ENCODE measurements at regions of chr12 and their contacts with region 1.

Region 1: GRCh38 chr12:14845350-14845750 is 2.0 kb upstream of the ART4 start:
- DNase-seq: peak; percentile 6
- H3K4me3 Mint-ChIP-seq: no peak overlapping the region
- H3K27ac Mint-ChIP-seq: no peak overlapping the region
- H3K4me1 Mint-ChIP-seq: peaks cover 5% of the 10 kb centered on the region
- H3K27me3 Mint-ChIP-seq: peaks cover 5% of the 10 kb centered on the region

Region 2: GRCh38 chr12:14723763-14724162 is 121.6 kb before region 1 on chr12:
- intact Hi-C with region 1: loop called (anchors 1 kb)
- DNase-seq: peak; percentile 31
- H3K4me3 Mint-ChIP-seq: no peak overlapping the region
- H3K27ac Mint-ChIP-seq: no peak overlapping the region
- H3K4me1 Mint-ChIP-seq: no peaks in the 10 kb centered on the region
- H3K27me3 Mint-ChIP-seq: peaks cover 15% of the 10 kb centered on the region

Region 3: DNA sequence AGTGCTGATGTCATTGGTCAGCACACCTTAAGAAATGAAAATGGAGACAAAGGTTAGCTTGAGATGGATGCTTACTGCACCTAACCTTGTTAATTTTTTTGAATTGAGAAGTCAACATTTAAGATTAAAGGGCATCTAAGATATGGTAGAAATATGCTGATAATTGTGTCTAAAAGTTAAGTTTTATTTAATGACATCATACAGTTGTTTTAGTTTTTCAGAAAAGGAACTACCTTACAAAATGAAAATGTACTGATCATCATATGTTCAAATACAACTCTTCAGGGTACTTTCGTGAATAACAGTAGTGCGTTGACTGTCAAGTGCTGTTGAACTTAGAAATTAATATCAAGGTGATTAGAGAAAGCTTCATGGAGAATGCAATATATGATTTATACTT is 33.9 kb before region 1 on chr12:
- intact Hi-C with region 1: no loop called
- DNase-seq: no peak
- H3K4me3 Mint-ChIP-seq: no peak overlapping the region
- H3K27ac Mint-ChIP-seq: no peak overlapping the region
- H3K4me1 Mint-ChIP-seq: peaks cover 8% of the 10 kb centered on the region
- H3K27me3 Mint-ChIP-seq: peaks cover 5% of the 10 kb centered on the region

Region 4: DNA sequence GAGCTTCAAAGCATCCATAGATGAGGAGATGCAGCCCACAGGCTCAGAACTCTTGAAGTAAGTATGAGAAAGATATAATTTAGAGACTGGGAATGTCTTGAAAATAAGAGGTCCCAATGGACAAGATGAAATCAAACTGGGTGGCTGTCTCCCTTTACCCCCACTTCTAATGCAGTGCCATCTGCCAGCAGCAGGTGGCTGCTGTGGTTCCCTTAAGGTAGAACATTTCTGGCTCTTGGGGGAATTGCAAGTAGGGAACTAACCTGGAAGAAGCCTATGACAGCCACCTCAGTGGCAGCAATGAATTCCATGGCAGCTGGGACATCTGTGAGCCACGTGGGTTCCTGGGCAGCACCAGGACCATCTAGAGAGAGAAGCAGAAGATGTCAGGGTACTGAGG is 92.3 kb after region 1 on chr12:
- intact Hi-C with region 1: loop called (anchors 5 kb)
- DNase-seq: no peak
- H3K4me3 Mint-ChIP-seq: no peak overlapping the region
- H3K27ac Mint-ChIP-seq: no peak overlapping the region
- H3K4me1 Mint-ChIP-seq: peaks cover 12% of the 10 kb centered on the region
- H3K27me3 Mint-ChIP-seq: no peaks in the 10 kb centered on the region

Measured in activated T-helper 1 cell treated with anti-CD3 and anti-CD28 coated beads, Interleukin-12 subunit alpha, Interleukin-12 subunit beta, Interleukin-2, Interleukin-4 antibody, amounts not matched to agents 30 ng/mL and 10 ng/mL and 1 ng/mL, durations not matched to agents 14 hours and 24 hours and 36 hours (primary cell).